Endothelial cell of umbilical vein (primary cell): ENCODE measurements at regions of chr2 and their contacts with region 1.

Region 1: GRCh38 chr2:11784747-11785610 is 38.5 kb downstream of the LPIN1 start:
- DNase-seq: peak; percentile 49
- H3K4me3 ChIP-seq: peak overlapping the region in 1 of 3 experiments; percentile 26
- H3K27ac ChIP-seq: no peak overlapping the region
- H3K4me1 ChIP-seq: no peaks in the 10 kb centered on the region
- H3K27me3 ChIP-seq: no peaks in the 10 kb centered on the region
- CTCF ChIP-seq: peak; percentile 94 to 99
- POLR2A ChIP-seq: no peak

Region 2: DNA sequence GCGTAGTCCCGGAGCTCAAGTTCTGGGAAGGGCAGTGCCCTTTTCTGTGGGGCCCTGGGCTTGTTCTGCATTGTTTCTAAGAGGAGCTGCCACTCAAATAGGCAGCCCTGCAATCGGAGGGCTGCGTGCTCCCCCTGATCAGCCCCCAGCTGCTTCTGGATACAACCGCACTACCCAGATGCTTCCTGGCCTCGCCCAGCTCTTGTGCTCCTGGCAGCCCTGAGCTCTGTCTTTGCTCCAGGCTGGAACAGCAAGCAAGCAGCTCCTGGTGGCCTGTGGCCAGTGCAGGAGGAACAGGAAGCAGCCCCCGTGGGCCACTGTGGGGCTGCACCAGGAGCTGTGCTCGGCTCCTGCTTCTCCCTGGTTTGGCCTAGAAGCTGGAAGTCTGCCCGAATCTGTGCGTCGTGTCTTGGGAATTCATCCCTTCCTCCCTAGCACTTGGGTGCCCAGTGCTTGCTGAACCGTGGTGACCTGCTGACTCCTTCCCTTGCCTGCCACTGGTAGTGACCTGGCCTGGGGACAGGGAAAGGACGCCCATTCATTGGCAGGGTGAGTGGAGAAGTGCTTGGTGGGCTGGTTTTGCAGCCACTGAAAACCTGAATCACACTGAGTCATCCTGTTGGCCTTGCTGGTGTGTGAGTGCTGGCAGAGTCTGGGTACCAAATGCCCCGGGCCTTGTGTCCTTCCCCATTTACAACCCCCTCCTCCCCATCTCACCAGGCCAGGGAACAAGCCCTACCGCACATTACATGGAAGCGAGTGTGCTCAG is 87.7 kb before region 1 on chr2:
- CTCF ChIA-PET with region 1: interaction called, 47 read pairs
- POLR2A ChIA-PET with region 1: no interaction called
- dilution Hi-C with region 1: no loop called
- intact Hi-C with region 1: no loop called
- DNase-seq: peak; percentile 70
- H3K4me3 ChIP-seq: no peak overlapping the region
- H3K27ac ChIP-seq: no peak overlapping the region
- H3K4me1 ChIP-seq: peaks cover 11% of the 10 kb centered on the region
- H3K27me3 ChIP-seq: no peaks in the 10 kb centered on the region
- CTCF ChIP-seq: no peak
- POLR2A ChIP-seq: no peak

Region 3: GRCh38 chr2:11738589-11739436 is 46.2 kb before region 1 on chr2:
- CTCF ChIA-PET with region 1: interaction called, 80 read pairs
- POLR2A ChIA-PET with region 1: no interaction called
- dilution Hi-C with region 1: no loop called
- intact Hi-C with region 1: loop called (anchors 1 kb)
- DNase-seq: peak; percentile 52
- H3K4me3 ChIP-seq: no peak overlapping the region
- H3K27ac ChIP-seq: no peak overlapping the region
- H3K4me1 ChIP-seq: peaks cover 23% of the 10 kb centered on the region
- H3K27me3 ChIP-seq: peaks cover 6 to 10% of the 10 kb centered on the region in 2 experiments
- CTCF ChIP-seq: peak; percentile 47 to 71
- POLR2A ChIP-seq: no peak

Region 4: DNA sequence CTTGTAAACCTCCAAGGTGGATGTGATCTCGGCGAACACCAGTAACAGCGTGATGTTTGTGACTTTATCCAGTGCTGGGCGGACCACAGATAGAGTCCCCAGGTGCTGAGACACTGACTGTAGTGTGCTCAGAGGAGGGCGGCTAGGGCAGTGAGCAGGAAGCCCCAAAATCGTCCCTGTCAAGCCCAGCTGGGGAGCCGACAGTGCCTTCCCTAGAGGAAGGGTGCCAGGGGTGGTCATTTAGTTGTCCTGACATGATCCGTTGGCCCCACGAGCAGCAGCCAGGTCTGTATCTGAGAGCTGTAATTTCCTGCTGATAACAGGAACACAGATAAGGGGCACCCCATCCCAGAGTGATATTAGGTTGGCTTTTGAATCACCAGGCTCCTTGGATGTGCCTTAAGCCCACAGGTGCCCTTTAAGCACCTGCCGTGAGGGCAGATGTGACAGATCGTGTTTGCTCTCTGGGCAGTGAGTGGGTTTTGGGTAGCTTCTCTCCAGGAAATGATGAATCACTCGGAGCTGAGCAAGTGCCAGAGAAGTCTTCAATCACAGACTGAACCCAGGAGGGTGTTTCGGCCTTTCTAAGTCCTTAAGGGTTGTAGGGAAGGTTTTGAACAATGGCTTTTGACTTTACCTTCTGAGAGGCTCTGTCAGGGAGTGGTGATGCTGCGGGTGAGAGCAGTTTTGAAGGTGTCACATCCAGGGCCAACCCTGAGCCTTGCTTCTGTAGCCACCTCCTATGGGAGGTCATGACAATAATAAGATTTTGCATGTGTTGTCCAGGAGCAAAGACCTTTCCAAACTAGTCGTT is 30.9 kb before region 1 on chr2:
- CTCF ChIA-PET with region 1: interaction called, 33 read pairs
- POLR2A ChIA-PET with region 1: no interaction called
- dilution Hi-C with region 1: no loop called
- intact Hi-C with region 1: no loop called
- DNase-seq: peak; percentile 86
- H3K4me3 ChIP-seq: peak overlapping the region in 1 of 3 experiments; percentile 41
- H3K27ac ChIP-seq: peak overlapping the region; percentile 78
- H3K4me1 ChIP-seq: peaks cover 30% of the 10 kb centered on the region
- H3K27me3 ChIP-seq: no peaks in the 10 kb centered on the region
- CTCF ChIP-seq: no peak
- POLR2A ChIP-seq: no peak

Region 5: DNA sequence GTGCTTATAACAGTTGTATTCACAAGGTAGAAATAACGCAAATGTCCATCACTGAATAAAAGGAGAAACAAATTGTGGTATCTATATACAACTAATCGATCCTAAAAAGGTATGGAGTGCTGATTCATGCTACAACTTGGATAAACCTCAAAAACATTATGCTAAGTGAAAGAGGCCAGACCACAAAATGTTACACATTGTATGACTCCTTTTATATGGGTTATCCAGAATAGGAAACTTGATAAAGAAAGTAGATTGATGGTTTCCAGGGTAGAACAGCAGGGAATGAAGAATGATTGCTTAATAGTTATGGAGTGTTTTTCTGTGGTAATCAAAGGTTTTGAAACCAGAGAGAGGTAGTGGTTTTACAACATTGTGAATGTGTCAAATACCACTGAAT is 499.5 kb after region 1 on chr2:
- CTCF ChIA-PET with region 1: no interaction called
- POLR2A ChIA-PET with region 1: no interaction called
- dilution Hi-C with region 1: no loop called
- intact Hi-C with region 1: no loop called
- DNase-seq: no peak
- H3K4me3 ChIP-seq: no peak overlapping the region
- H3K27ac ChIP-seq: no peak overlapping the region
- H3K4me1 ChIP-seq: peaks cover 15% of the 10 kb centered on the region
- H3K27me3 ChIP-seq: peaks cover 0 to 3% of the 10 kb centered on the region in 2 experiments
- CTCF ChIP-seq: no peak
- POLR2A ChIP-seq: no peak